Panc1 (cell line): ENCODE measurements at regions of chr12 and their contacts with region 1.

Region 1: GRCh38 chr12:4421590-4422031 is 24.0 kb downstream of the FGF6 start:
- DNase-seq: peak; percentile 12
- ATAC-seq: peak; percentile 69; the same call in 1 of the 2 replicates
- H3K4me3 ChIP-seq: no peak overlapping the region
- H3K27ac ChIP-seq: no peak overlapping the region
- H3K4me1 ChIP-seq: no peaks in the 10 kb centered on the region
- H3K27me3 ChIP-seq: no peaks in the 10 kb centered on the region; the same call in 1 of the 2 replicates
- CTCF ChIP-seq: peak; percentile 73

Region 2: DNA sequence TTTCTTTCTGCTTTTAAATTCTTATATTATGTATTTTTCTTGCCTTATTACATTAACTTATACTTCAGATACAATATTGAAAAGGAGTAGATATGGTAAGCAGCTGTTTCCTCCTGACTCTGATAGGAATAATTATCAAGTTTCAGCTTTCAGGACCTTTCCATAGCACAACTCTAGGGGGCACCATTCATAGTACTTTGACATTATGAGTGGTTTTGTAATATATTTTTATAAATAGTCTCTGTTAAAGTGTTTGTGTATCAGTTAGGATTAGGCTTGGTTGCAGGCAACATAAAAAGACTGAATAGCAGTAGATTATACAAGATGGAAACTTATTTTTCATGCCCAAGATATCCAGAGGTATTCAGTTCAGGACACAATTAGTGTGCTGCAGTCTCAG is 520.5 kb before region 1 on chr12:
- CTCF ChIA-PET with region 1: interaction called, 10 read pairs
- POLR2A ChIA-PET with region 1: no interaction called
- in situ Hi-C with region 1: no loop called
- intact Hi-C with region 1: no loop called
- DNase-seq: no peak
- ATAC-seq: no peak
- H3K4me3 ChIP-seq: no peak overlapping the region
- H3K27ac ChIP-seq: no peak overlapping the region
- H3K4me1 ChIP-seq: no peaks in the 10 kb centered on the region
- H3K27me3 ChIP-seq: peaks cover 4% of the 10 kb centered on the region; the same call in 1 of the 2 replicates
- CTCF ChIP-seq: no peak; the same call in 1 of the 2 replicates

Region 3: GRCh38 chr12:4526923-4527546 is 105.4 kb after region 1 on chr12:
- CTCF ChIA-PET with region 1: interaction called, 5 read pairs
- POLR2A ChIA-PET with region 1: no interaction called
- in situ Hi-C with region 1: no loop called
- intact Hi-C with region 1: loop called (anchors 5 kb)
- DNase-seq: no peak
- ATAC-seq: no peak
- H3K4me3 ChIP-seq: no peak overlapping the region
- H3K27ac ChIP-seq: no peak overlapping the region
- H3K4me1 ChIP-seq: no peaks in the 10 kb centered on the region
- H3K27me3 ChIP-seq: no peaks in the 10 kb centered on the region
- CTCF ChIP-seq: no peak